Right cardiac atrium (tissue), 5 donors: ENCODE measurements at regions of chr11 and their contacts with region 1.

Region 1: DNA sequence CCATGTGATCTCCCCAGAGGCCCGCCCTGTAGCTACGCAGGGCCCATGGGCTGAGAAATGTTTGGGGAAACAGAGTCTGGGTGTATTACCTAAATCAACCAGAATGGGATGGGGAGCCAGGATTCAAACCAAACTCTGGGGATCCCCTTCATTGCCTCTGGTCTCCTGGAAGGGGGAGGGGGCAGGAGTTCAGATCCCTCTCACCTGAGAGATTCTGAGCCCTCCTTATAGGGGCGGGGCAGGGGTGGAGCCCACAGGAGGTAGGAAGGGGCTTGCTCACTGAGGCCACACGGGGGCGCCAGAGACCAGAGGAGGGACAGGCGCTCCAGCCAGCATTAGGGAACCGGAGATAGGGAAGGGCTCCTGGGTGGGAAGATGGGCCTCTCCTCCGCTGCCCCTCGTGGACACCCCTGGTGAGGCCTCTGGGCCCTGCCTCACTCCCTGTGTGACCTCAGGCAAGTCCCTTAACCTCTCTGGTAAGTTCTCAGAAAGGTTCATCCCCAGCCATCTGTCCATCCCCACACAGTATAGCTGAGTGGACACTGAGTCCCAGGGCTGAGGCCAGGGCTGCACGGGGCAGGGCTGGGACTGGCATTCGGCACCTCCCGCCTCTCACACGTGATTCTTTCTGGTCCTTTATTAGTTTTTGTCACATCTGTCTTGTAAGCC is 2.7 kb upstream of the CDC42BPG start:
- DNase-seq: peak; percentile 93 to 97 (median 95)
- ATAC-seq: peak; percentile 86 to 88
- H3K4me3 ChIP-seq: no peak overlapping the region
- H3K27ac ChIP-seq: no peak overlapping the region
- H3K4me1 ChIP-seq: peaks cover 11% of the 10 kb centered on the region
- H3K27me3 ChIP-seq: no peaks in the 10 kb centered on the region

Region 2: GRCh38 chr11:64894070-64894796 is 47.1 kb after region 1 on chr11:
- intact Hi-C with region 1: loop called (anchors 2 to 5 kb)
- DNase-seq: peak; percentile 90 to 96 (median 96)
- ATAC-seq: peak; percentile 80 to 82
- H3K4me3 ChIP-seq: no peak overlapping the region
- H3K27ac ChIP-seq: no peak overlapping the region
- H3K4me1 ChIP-seq: no peaks in the 10 kb centered on the region
- H3K27me3 ChIP-seq: no peaks in the 10 kb centered on the region

Region 3: GRCh38 chr11:64935359-64936081 is 88.4 kb after region 1 on chr11 and contains the start of gene GPHA2:
- intact Hi-C with region 1: no loop called
- DNase-seq: no peak
- ATAC-seq: no peak
- H3K4me3 ChIP-seq: no peak within 1 kb of the TSS
- H3K27ac ChIP-seq: no peak within 1 kb of the TSS
- H3K4me1 ChIP-seq: no peaks in the 10 kb centered on the region
- H3K27me3 ChIP-seq: no peaks in the 10 kb centered on the region
- total RNA-seq, gene GPHA2: not detected